Endothelial cell of umbilical vein (primary cell): ENCODE measurements at regions of chr2 and their contacts with region 1.

Region 1: GRCh38 chr2:176088048-176088936 is 4.2 kb upstream of the HOXD13 start:
- DNase-seq: peak; percentile 51
- H3K4me3 ChIP-seq: no peak overlapping the region
- H3K27ac ChIP-seq: no peak overlapping the region
- H3K4me1 ChIP-seq: no peaks in the 10 kb centered on the region
- H3K27me3 ChIP-seq: peaks cover 87 to 98% of the 10 kb centered on the region in 2 experiments
- CTCF ChIP-seq: peak; percentile 68 to 87
- POLR2A ChIP-seq: no peak

Region 2: GRCh38 chr2:175366815-175367214 is 721.5 kb before region 1 on chr2:
- CTCF ChIA-PET with region 1: interaction called, 20 read pairs
- POLR2A ChIA-PET with region 1: no interaction called
- dilution Hi-C with region 1: no loop called
- intact Hi-C with region 1: loop called (anchors 1 kb)
- DNase-seq: peak; percentile 70
- H3K4me3 ChIP-seq: no peak overlapping the region
- H3K27ac ChIP-seq: no peak overlapping the region
- H3K4me1 ChIP-seq: no peaks in the 10 kb centered on the region
- H3K27me3 ChIP-seq: peaks cover 5 to 34% of the 10 kb centered on the region in 2 experiments
- CTCF ChIP-seq: peak; percentile 74 to 75
- POLR2A ChIP-seq: no peak

Region 3: GRCh38 chr2:175414882-175415487 is 673.3 kb before region 1 on chr2:
- CTCF ChIA-PET with region 1: no interaction called
- POLR2A ChIA-PET with region 1: no interaction called
- dilution Hi-C with region 1: no loop called
- intact Hi-C with region 1: loop called (anchors 2 kb)
- DNase-seq: peak; percentile 57
- H3K4me3 ChIP-seq: no peak overlapping the region
- H3K27ac ChIP-seq: no peak overlapping the region
- H3K4me1 ChIP-seq: no peaks in the 10 kb centered on the region
- H3K27me3 ChIP-seq: no peaks in the 10 kb centered on the region
- CTCF ChIP-seq: peak; percentile 44 to 63
- POLR2A ChIP-seq: no peak

Region 4: DNA sequence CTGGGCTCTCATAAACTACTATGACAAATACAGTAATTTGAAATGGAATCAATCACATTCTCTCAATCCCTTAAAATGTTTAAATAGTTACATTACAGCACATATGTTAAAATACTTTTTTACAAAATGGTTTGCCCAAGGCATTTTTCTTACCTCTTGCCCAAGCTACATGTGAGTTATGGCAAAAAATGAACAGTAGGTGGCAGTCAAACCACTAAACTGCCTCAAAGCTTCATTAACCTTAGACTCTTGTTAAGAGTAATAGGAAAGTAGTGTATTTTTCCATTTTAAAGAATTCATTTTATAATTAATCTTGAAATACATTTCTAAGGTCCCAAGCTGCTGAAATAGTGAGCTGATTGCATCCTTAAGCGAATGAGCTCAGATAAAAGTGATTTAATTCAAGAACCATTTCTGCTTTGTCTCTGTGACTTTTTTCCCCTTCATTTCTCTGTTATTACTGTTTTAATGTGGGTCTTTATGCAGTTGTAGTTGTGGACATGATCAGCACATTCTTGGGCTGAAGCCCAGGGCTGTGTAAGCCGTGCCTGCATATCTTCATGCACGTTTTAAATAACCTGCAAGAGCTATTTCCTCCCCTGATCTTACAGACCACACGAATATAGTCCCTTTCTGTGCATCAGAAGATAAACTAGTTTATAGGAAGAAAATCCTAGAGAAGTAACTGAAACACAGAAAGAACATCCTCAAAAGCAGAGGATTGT is 398.0 kb before region 1 on chr2:
- CTCF ChIA-PET with region 1: interaction called, 102 read pairs
- POLR2A ChIA-PET with region 1: no interaction called
- dilution Hi-C with region 1: no loop called
- intact Hi-C with region 1: loop called (anchors 1 kb)
- DNase-seq: peak; percentile 81
- H3K4me3 ChIP-seq: no peak overlapping the region
- H3K27ac ChIP-seq: no peak overlapping the region
- H3K4me1 ChIP-seq: no peaks in the 10 kb centered on the region
- H3K27me3 ChIP-seq: peaks cover 2 to 4% of the 10 kb centered on the region in 2 experiments
- CTCF ChIP-seq: peak; percentile 42 to 54
- POLR2A ChIP-seq: no peak